ENCODE measurements at regions of chr5 and their contacts with region 1.

Region 1: DNA sequence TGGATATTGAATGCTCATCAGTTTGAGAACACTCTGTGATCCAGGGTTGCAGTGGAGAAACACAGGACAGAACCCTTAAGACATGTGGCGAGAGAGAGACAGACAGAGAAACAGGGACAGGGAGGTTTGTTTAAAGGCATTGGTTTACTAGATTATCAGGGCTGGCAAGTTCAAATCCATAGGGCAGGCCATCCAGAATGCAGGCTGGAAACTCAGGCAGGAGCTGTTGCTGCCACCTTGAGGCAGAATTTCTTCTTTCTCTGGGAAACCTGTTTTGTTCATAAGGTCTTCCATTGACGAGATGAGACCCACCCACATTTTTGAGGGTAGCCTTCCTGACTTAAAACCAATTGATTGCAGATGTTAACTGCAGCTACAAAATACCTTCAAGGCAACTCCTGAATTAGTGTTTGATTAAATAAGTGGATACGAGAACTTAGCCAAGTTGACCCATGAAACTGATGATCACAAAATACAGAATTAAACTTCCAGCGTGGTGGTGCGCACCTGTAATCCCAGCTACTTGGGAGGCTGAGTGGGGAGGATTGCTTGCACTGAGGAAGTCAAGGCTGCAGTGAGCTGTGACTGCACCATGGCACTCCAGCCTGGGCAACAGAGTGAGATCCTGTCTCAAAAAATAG is 55.9 kb downstream of the NSUN2 start:
- DNase-seq: no peak
- ATAC-seq: peak; percentile 21
- H3K4me3 Mint-ChIP-seq: no peak overlapping the region
- H3K27ac Mint-ChIP-seq: no peak overlapping the region
- H3K4me1 Mint-ChIP-seq: no peaks in the 10 kb centered on the region
- H3K27me3 Mint-ChIP-seq: peaks cover 14% of the 10 kb centered on the region
- CTCF ChIP-seq: no peak

Region 2: DNA sequence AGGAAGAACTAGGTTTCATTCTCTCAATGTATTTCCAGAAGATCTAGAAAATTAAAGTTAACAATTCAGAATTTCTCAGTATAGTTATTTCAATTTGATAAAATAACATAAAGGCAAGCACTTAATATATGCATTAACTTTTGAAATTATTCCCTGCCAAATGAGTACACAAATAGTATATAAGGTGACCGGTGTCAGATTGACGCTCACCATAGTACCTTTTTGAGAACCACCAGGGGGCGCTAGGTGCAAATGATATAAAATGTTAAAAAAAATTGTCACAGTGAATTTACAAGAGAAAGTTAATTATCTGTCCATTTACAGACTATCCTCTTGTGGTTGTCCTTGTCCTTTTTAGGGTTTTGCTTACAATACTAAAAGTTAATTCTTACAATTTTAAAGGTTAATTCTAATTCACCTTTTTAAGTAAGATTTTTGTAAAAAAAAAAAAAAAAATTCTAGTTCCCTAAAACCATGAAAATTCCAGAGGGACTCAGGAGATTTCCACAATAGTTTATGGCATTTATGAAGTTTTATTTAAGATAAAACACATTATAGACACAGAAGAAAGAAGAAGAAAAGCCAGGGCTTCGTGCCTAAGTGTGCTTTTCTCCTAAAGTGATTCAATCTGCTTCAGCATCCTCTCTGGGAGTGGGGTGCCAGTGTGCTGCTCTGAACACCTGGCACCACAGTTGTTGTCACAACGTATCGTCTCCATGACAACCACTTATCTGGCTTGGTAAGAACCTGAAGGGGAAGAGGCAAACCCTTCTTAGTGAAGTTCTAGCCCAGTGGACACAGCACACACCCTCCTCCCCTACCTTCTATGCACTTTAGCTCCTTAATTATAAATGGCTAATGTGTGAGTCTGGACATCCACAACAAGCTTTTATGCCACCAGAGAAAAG is 1435.1 kb before region 1 on chr5:
- CTCF ChIA-PET with region 1: no interaction called
- POLR2A ChIA-PET with region 1: no interaction called
- intact Hi-C with region 1: loop called (anchors 2 kb)
- DNase-seq: no peak
- ATAC-seq: no peak
- H3K4me3 Mint-ChIP-seq: no peak overlapping the region
- H3K27ac Mint-ChIP-seq: no peak overlapping the region
- H3K4me1 Mint-ChIP-seq: no peaks in the 10 kb centered on the region
- H3K27me3 Mint-ChIP-seq: peaks cover 18% of the 10 kb centered on the region
- CTCF ChIP-seq: peak; percentile 82

Region 3: GRCh38 chr5:5886812-5887486 is 690.0 kb before region 1 on chr5:
- CTCF ChIA-PET with region 1: interaction called, 3 read pairs
- POLR2A ChIA-PET with region 1: no interaction called
- intact Hi-C with region 1: loop called (anchors 2 kb)
- DNase-seq: peak; percentile 51
- ATAC-seq: peak; percentile 87
- H3K4me3 Mint-ChIP-seq: peak overlapping the region; percentile 62
- H3K27ac Mint-ChIP-seq: no peak overlapping the region
- H3K4me1 Mint-ChIP-seq: no peaks in the 10 kb centered on the region
- H3K27me3 Mint-ChIP-seq: peaks cover 2% of the 10 kb centered on the region
- CTCF ChIP-seq: no peak

Region 4: DNA sequence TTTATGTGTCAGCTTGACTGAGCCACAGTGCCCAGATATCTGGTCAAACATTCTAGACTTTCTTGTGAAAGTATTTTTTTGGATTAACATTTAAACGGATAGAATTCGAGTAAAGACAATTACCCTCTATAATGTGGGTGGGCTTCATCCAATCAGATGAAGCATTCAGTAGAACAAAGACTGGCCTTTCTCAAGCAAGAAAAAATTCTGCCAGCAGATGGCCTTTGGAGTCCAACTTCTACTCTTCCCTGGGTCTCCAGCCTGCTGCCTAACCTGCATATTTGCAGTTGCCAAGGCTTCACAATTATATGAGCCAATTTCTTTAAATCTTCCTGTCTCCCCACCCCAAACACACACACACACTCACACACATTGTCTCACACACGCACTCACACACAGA is 285.0 kb before region 1 on chr5:
- CTCF ChIA-PET with region 1: no interaction called
- POLR2A ChIA-PET with region 1: no interaction called
- intact Hi-C with region 1: loop called (anchors 2 kb)
- DNase-seq: no peak
- ATAC-seq: no peak
- H3K4me3 Mint-ChIP-seq: no peak overlapping the region
- H3K27ac Mint-ChIP-seq: no peak overlapping the region
- H3K4me1 Mint-ChIP-seq: no peaks in the 10 kb centered on the region
- H3K27me3 Mint-ChIP-seq: no peaks in the 10 kb centered on the region
- CTCF ChIP-seq: peak; percentile 23

Region 5: GRCh38 chr5:6377905-6378765 is 198.8 kb before region 1 on chr5 and contains the start of gene MED10:
- CTCF ChIA-PET with region 1: interaction called, 3 read pairs
- POLR2A ChIA-PET with region 1: no interaction called
- intact Hi-C with region 1: loop called (anchors 5 kb)
- DNase-seq: peak; percentile 91
- ATAC-seq: peak; percentile 98
- H3K4me3 Mint-ChIP-seq: peak within 1 kb of the TSS; percentile 95
- H3K27ac Mint-ChIP-seq: peak within 1 kb of the TSS; percentile 89
- H3K4me1 Mint-ChIP-seq: peaks cover 38% of the 10 kb centered on the region
- H3K27me3 Mint-ChIP-seq: peaks cover 2% of the 10 kb centered on the region
- CTCF ChIP-seq: no peak
- total RNA-seq, gene MED10: 45.0 and 47.7 TPM in 2 replicates

Region 6: GRCh38 chr5:6448622-6449464 is 128.1 kb before region 1 on chr5 and contains the start of gene UBE2QL1:
- CTCF ChIA-PET with region 1: no interaction called
- POLR2A ChIA-PET with region 1: no interaction called
- intact Hi-C with region 1: loop called (anchors 10 kb)
- DNase-seq: peak; percentile 27
- ATAC-seq: peak; percentile 78
- H3K4me3 Mint-ChIP-seq: peak within 1 kb of the TSS; percentile 83
- H3K27ac Mint-ChIP-seq: peak within 1 kb of the TSS; percentile 20
- H3K4me1 Mint-ChIP-seq: peaks cover 14% of the 10 kb centered on the region
- H3K27me3 Mint-ChIP-seq: peaks cover 40% of the 10 kb centered on the region
- CTCF ChIP-seq: no peak
- total RNA-seq, gene UBE2QL1: 1.2 and 1.3 TPM in 2 replicates